HepG2 (cell line): ENCODE measurements at regions of chr5 and their contacts with region 1.

Region 1: DNA sequence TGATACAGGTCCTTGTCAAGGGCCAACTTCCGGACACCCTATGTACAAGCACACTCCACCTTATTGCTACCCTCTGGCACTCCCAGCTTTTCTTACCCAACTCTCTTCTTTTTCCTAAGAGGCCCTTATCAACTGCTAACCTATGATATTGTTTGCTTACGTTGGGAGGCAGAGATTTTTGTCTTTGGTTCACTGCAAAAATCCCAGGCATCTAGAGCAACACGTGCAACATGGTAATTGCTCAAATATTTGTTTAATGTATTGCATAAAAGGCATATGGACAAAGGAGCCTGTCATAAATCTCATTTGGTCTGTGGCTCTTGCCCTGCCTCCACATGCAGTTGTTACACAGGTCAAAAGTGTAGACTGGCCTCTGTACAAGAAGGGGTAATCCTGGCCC is 35.8 kb upstream of the ATP10B start:
- DNase-seq: peak; percentile 95
- ATAC-seq: peak; percentile 96
- H3K4me3 ChIP-seq: no peak overlapping the region
- H3K27ac ChIP-seq: peak overlapping the region; percentile 61
- H3K4me1 ChIP-seq: peaks cover 47% of the 10 kb centered on the region
- H3K27me3 ChIP-seq: no peaks in the 10 kb centered on the region
- CTCF ChIP-seq: no peak
- EP300 ChIP-seq: peak; percentile 59 to 92; a peak in 3 of 4 replicates
- POLR2A ChIP-seq: no peak
- RAD21 ChIP-seq: no peak

Region 2: DNA sequence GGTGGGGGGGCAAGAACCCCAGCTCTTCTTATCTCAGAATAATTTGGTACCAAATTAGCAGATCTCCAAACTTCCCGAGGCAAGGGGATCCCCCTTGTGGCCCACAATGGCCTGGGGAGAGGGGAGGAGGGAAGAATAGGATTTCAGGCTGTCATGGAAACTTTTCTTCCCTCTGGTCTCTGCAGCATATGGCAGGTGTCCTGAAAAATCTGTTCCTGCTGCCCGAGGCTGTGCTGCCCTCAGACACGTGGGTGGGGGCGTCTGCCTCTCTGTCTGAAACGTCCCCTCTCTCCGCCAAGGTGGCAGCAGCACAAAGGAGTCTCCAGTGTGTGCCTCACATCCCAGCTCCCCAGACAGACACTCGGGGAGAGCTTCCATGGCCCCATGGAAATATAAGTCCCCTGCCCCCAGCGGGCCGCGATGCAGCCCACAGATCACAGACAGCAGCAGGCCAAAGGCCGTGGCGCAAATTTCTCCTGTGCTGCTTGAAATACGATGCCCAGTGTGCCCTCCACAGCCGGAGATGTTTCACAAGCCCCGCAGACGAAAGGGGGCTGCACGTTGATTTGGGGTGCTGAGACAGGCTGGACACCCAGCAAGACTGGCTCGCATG is 609.3 kb before region 1 on chr5:
- CTCF ChIA-PET with region 1: no interaction called
- POLR2A ChIA-PET with region 1: no interaction called
- in situ Hi-C with region 1: no loop called
- intact Hi-C with region 1: no loop called
- DNase-seq: no peak
- ATAC-seq: no peak
- H3K4me3 ChIP-seq: no peak overlapping the region
- H3K27ac ChIP-seq: no peak overlapping the region
- H3K4me1 ChIP-seq: no peaks in the 10 kb centered on the region
- H3K27me3 ChIP-seq: no peaks in the 10 kb centered on the region
- CTCF ChIP-seq: no peak
- EP300 ChIP-seq: no peak
- POLR2A ChIP-seq: no peak
- RAD21 ChIP-seq: no peak

Region 3: DNA sequence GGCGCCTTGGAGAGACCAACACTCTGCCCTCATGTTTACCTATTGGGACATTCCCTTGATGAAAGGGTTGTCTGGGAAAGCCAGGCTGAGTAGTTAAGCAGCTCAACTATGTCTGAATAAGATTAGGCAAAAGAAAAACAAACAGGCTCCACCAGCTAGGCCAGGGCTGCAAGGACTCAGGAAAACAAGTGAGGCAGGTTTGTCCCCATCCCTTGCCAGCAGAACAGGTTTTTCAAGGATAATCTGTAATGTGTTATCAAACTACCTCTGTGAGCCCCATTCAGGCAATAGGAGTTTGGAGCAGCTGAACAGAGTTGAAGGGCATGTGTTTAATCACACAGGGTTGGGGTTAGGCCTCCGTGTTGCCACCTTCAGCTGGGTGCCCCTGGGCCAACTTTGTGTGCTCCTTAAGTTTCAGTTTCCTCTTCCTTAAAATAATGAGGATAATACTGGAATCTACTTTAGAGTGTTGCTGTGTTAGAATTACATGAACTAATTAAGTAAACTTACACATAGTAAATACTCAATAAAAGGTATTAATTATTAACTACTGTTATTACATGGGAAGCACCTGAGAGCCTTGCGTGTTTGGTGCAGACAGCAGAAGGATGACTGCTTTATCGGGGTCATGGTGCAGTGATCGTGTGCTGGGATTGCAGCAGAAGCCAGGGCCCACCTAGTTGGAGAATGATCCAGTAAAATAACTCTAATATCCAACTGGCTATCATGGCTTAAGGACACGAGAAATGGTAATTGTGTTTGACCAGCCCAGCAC is 36.3 kb after region 1 on chr5:
- CTCF ChIA-PET with region 1: no interaction called
- POLR2A ChIA-PET with region 1: no interaction called
- in situ Hi-C with region 1: no loop called
- intact Hi-C with region 1: loop called (anchors 5 kb)
- DNase-seq: peak; percentile 67
- ATAC-seq: peak; percentile 92
- H3K4me3 ChIP-seq: 0 out of 6 replicates have a peak overlapping the region, but pooled peaks of 1 of the 3 experiments have one; percentile 4
- H3K27ac ChIP-seq: no peak overlapping the region
- H3K4me1 ChIP-seq: peaks cover 23% of the 10 kb centered on the region
- H3K27me3 ChIP-seq: no peaks in the 10 kb centered on the region
- CTCF ChIP-seq: no peak
- EP300 ChIP-seq: peak in 1 of 2 experiments; percentile 37; a peak in 1 of 4 replicates
- POLR2A ChIP-seq: no peak
- RAD21 ChIP-seq: no peak